Sigmoid colon (tissue), 7 donors: ENCODE measurements at regions of chr1 and their contacts with region 1.

Region 1: DNA sequence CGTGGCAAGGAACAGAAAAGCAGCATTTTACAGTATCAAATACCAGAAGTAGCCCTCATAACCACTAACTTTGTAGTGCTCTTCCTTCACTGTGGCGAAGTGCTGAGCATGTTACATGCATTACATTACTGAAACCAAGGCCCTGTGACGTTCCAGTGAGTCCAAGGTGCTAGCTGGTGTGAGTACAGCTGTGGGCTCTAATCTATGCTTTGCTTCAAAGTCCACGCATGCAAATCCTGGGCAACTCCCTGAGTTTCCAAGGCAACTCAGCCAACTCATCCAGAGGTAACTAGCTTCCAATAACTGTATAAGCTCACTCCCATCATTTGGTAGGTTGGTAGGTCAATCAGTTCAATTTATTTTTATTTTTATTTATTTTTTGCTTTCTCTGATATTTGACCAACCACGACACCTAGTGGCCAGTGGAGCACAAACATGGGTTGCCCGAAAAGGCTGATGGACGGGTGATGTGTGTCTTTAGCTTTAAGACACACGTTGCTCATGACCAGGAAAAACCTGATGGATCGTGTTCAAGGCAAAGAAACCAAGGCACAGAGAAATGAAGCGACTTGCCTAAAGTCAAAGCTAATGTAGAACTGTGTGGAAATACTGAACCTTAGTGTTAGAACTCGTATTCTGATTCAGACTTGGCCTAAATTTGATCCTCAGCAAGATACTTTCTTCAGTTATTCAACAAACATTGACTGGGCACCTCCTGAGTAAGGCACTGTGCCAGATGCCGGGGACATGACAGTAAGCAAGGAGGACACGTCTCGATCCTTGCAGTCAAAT is 73.0 kb downstream of the GNG12 start:
- DNase-seq: no peak
- H3K4me3 ChIP-seq: no peak overlapping the region
- H3K27ac ChIP-seq: peak overlapping the region in 3 of 4 donors; percentile 37 to 56 (median 44)
- H3K4me1 ChIP-seq: peaks cover 0 to 22% (median 9%) of the 10 kb centered on the region in 4 donors
- H3K27me3 ChIP-seq: no peaks in the 10 kb centered on the region
- CTCF ChIP-seq: peak; percentile 58 to 92 (median 84)
- EP300 ChIP-seq: no peak
- POLR2A ChIP-seq: no peak

Region 2: GRCh38 chr1:67535474-67535873 is 224.8 kb before region 1 on chr1:
- intact Hi-C with region 1: loop called (anchors 1 kb)
- DNase-seq: peak; percentile 88
- H3K4me3 ChIP-seq: no peak overlapping the region
- H3K27ac ChIP-seq: no peak overlapping the region
- H3K4me1 ChIP-seq: peaks cover 0 to 5% (median 0%) of the 10 kb centered on the region in 4 donors
- H3K27me3 ChIP-seq: peaks cover 0 to 3% (median 0%) of the 10 kb centered on the region in 3 donors
- CTCF ChIP-seq: peak; percentile 48 to 75 (median 62)
- EP300 ChIP-seq: no peak
- POLR2A ChIP-seq: no peak